Naive thymus-derived CD4-positive, alpha-beta T cell (primary cell): ENCODE measurements at regions of chr6 and their contacts with region 1.

Region 1: DNA sequence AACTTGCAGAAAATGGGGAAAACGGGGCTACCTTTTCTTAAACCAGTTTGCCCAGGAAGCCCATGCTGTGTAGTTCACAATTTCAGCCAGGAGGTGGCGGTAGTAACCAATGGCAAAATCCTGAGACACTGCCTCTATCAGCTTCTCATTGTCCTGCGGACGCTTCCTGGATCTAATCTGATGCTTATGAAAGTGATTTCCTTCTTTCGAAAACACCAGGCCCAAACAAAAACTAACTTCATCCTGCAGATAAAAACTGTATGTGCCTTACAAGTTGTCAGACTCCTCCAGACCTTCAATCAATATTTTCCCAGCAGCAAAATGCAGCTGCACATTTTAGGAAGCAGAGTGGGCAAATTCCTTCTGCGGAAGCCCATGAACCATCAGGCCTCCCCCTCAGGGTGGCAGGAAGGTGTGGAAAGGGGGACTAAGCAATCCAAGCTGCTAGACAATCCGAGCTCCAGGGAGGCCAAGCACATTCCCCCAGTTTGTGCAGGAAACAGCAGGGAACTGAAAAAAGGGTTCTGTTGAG is 88.5 kb downstream of the LY86 start:
- DNase-seq: peak; percentile 57 to 88 (median 77)
- ATAC-seq: peak; percentile 93
- H3K4me3 ChIP-seq: no peak overlapping the region
- H3K4me3 Mint-ChIP-seq: peak overlapping the region in 8 of 10 donors; percentile 0 to 73 (median 43)
- H3K27ac ChIP-seq: no peak overlapping the region
- H3K27ac Mint-ChIP-seq: peak overlapping the region in 6 of 9 donors; percentile 28 to 95 (median 80)
- H3K4me1 ChIP-seq: peaks cover 0 to 6% of the 10 kb centered on the region in 2 donors
- H3K4me1 Mint-ChIP-seq: peaks cover 4 to 41% (median 11%) of the 10 kb centered on the region in 7 donors
- H3K27me3 ChIP-seq: no peaks in the 10 kb centered on the region
- H3K27me3 Mint-ChIP-seq: peaks cover 0 to 5% (median 0%) of the 10 kb centered on the region in 5 donors

Region 2: DNA sequence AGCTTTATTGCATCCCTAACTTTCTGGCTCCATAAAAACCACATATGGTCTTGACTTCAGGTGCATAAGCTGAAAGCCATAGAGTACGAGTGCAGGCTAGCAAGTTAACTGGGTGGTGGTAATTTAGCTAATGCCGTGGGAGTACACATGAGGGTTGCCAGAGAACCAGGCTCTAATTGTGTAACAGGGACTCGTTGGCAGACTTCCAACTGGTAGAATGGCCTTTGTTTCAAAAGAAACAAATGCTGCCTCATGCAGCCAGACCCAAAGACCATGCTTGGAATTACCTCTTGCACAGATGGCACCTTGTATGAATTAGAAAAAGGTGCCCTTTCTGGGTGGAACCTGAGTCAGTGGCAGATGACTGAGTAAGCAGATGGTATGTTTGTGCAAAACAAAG is 15.3 kb before region 1 on chr6:
- CTCF ChIA-PET with region 1: interaction called, 10 read pairs
- POLR2A ChIA-PET with region 1: interaction called, 5 read pairs
- intact Hi-C with region 1: loop called (anchors 2 kb)
- DNase-seq: no peak
- ATAC-seq: no peak
- H3K4me3 ChIP-seq: no peak overlapping the region
- H3K4me3 Mint-ChIP-seq: peak overlapping the region in 1 of 10 donors; percentile 9
- H3K27ac ChIP-seq: no peak overlapping the region
- H3K27ac Mint-ChIP-seq: peak overlapping the region in 7 of 9 donors; percentile 40 to 99 (median 95)
- H3K4me1 ChIP-seq: peaks cover 0 to 43% of the 10 kb centered on the region in 2 donors
- H3K4me1 Mint-ChIP-seq: peaks cover 25 to 72% (median 65%) of the 10 kb centered on the region in 7 donors
- H3K27me3 ChIP-seq: no peaks in the 10 kb centered on the region
- H3K27me3 Mint-ChIP-seq: no peaks in the 10 kb centered on the region

Region 3: DNA sequence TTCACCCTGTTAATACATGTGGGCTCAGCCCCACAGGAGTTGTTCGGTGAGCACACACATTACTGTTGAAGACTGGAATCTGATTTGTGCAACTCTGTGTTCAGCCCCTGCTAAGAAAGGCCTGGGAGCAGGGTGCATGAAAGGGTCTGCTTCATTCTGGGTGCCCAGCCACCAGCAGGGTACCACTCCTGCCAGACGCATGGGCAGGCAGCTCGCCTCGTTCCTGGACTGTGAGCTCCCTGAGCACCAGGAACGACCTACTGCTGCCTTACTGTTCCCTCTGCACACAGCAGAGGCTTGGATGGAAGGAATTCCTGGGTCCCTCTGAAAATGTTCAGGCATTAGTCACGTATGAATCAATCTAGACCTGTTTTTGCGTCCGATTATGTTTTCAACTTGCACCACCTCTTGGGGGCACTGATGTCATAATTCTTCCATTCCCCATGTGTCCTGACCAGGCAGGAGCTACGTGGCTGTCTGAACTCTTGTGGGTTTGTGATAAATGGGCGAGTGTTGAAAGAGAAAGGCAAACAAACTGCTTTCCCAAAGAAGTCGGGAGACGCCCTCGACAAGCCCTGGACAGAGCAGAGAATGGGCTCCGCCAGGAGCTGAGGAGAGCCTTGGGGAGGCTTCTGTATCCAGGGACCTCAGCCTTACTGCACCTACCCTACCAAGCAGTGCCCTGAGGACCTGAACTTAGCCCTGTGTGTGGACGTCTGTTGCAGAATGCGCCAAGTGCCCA is 35.5 kb after region 1 on chr6:
- CTCF ChIA-PET with region 1: no interaction called
- POLR2A ChIA-PET with region 1: no interaction called
- intact Hi-C with region 1: no loop called
- DNase-seq: no peak
- ATAC-seq: peak; percentile 43
- H3K4me3 ChIP-seq: no peak overlapping the region
- H3K4me3 Mint-ChIP-seq: peak overlapping the region; percentile 39 to 86 (median 74)
- H3K27ac ChIP-seq: no peak overlapping the region
- H3K27ac Mint-ChIP-seq: peak overlapping the region in 8 of 9 donors; percentile 11 to 81 (median 54)
- H3K4me1 ChIP-seq: peaks cover 0 to 19% of the 10 kb centered on the region in 2 donors
- H3K4me1 Mint-ChIP-seq: peaks cover 13 to 43% (median 29%) of the 10 kb centered on the region in 7 donors
- H3K27me3 ChIP-seq: no peaks in the 10 kb centered on the region
- H3K27me3 Mint-ChIP-seq: peaks cover 0 to 25% (median 7%) of the 10 kb centered on the region in 5 donors

Region 4: GRCh38 chr6:6793388-6794250 is 116.6 kb after region 1 on chr6:
- CTCF ChIA-PET with region 1: no interaction called
- POLR2A ChIA-PET with region 1: no interaction called
- intact Hi-C with region 1: loop called in 1 of 2 experiments (anchors 10 kb)
- DNase-seq: no peak
- ATAC-seq: peak; percentile 78
- H3K4me3 ChIP-seq: no peak overlapping the region
- H3K4me3 Mint-ChIP-seq: peak overlapping the region in 4 of 10 donors; percentile 3 to 37 (median 24)
- H3K27ac ChIP-seq: no peak overlapping the region
- H3K27ac Mint-ChIP-seq: peak overlapping the region in 2 of 9 donors; percentile 6 to 37
- H3K4me1 ChIP-seq: no peaks in the 10 kb centered on the region
- H3K4me1 Mint-ChIP-seq: peaks cover 5 to 52% (median 7%) of the 10 kb centered on the region in 7 donors
- H3K27me3 ChIP-seq: no peaks in the 10 kb centered on the region
- H3K27me3 Mint-ChIP-seq: no peaks in the 10 kb centered on the region

Region 5: GRCh38 chr6:7615611-7616383 is 938.8 kb after region 1 on chr6:
- CTCF ChIA-PET with region 1: interaction called, 3 read pairs
- POLR2A ChIA-PET with region 1: no interaction called
- intact Hi-C with region 1: loop called (anchors 1 kb)
- DNase-seq: peak in 7 of 9 donors; percentile 8 to 57 (median 46)
- ATAC-seq: peak; percentile 51
- H3K4me3 ChIP-seq: no peak overlapping the region
- H3K4me3 Mint-ChIP-seq: peak overlapping the region in 8 of 10 donors; percentile 6 to 65 (median 50)
- H3K27ac ChIP-seq: no peak overlapping the region
- H3K27ac Mint-ChIP-seq: peak overlapping the region in 5 of 9 donors; percentile 0 to 65 (median 11)
- H3K4me1 ChIP-seq: no peaks in the 10 kb centered on the region
- H3K4me1 Mint-ChIP-seq: peaks cover 8 to 20% (median 11%) of the 10 kb centered on the region in 7 donors
- H3K27me3 ChIP-seq: no peaks in the 10 kb centered on the region
- H3K27me3 Mint-ChIP-seq: peaks cover 0 to 4% (median 0%) of the 10 kb centered on the region in 5 donors

Region 6: GRCh38 chr6:8219352-8219943 is 1542.5 kb after region 1 on chr6:
- CTCF ChIA-PET with region 1: no interaction called
- POLR2A ChIA-PET with region 1: no interaction called
- intact Hi-C with region 1: loop called in 1 of 2 experiments (anchors 2 kb)
- DNase-seq: peak in 7 of 9 donors; percentile 4 to 53 (median 32)
- ATAC-seq: peak; percentile 75
- H3K4me3 ChIP-seq: no peak overlapping the region
- H3K4me3 Mint-ChIP-seq: no peak overlapping the region
- H3K27ac ChIP-seq: no peak overlapping the region
- H3K27ac Mint-ChIP-seq: no peak overlapping the region
- H3K4me1 ChIP-seq: no peaks in the 10 kb centered on the region
- H3K4me1 Mint-ChIP-seq: no peaks in the 10 kb centered on the region
- H3K27me3 ChIP-seq: no peaks in the 10 kb centered on the region
- H3K27me3 Mint-ChIP-seq: peaks cover 5 to 19% (median 9%) of the 10 kb centered on the region in 5 donors